Heart right ventricle (tissue), 16 donors: ENCODE measurements at regions of chr22 and their contacts with region 1.

Region 1: GRCh38 chr22:38705235-38706100 is at the start of gene GTPBP1:
- DNase-seq: peak; percentile 95 to 100
- ATAC-seq: peak; percentile 87 to 95 (median 94)
- H3K4me3 ChIP-seq: peak within 1 kb of the TSS; percentile 74 to 98 (median 88)
- H3K27ac ChIP-seq: peak within 1 kb of the TSS; percentile 86 to 98 (median 95)
- H3K4me1 ChIP-seq: peaks cover 12 to 55% (median 51%) of the 10 kb centered on the region in 9 donors
- H3K27me3 ChIP-seq: no peaks in the 10 kb centered on the region
- CTCF ChIP-seq: peak in 2 of 9 donors; percentile 28 to 35
- total RNA-seq, gene GTPBP1: 23.0 to 53.2 (median 34.2) TPM

Region 2: GRCh38 chr22:38656256-38657044 is 49.0 kb before region 1 on chr22 and contains the starts of genes CBY1 and FAM227A:
- intact Hi-C with region 1: loop called in 1 of 10 experiments (anchors 1 kb)
- DNase-seq: peak; percentile 88 to 90
- ATAC-seq: peak; percentile 95 to 98 (median 97)
- H3K4me3 ChIP-seq: peak within 1 kb of the TSS; percentile 66 to 98 (median 89)
- H3K27ac ChIP-seq: peak within 1 kb of the TSS; percentile 83 to 99 (median 96)
- H3K4me1 ChIP-seq: peaks cover 3 to 26% (median 19%) of the 10 kb centered on the region in 9 donors
- H3K27me3 ChIP-seq: no peaks in the 10 kb centered on the region
- CTCF ChIP-seq: peak in 3 of 9 donors; percentile 8 to 16 (median 16)
- total RNA-seq, gene CBY1: 33.8 to 51.0 (median 40.5) TPM
- total RNA-seq, gene FAM227A: 0.11 to 0.97 (median 0.46) TPM

Region 3: DNA sequence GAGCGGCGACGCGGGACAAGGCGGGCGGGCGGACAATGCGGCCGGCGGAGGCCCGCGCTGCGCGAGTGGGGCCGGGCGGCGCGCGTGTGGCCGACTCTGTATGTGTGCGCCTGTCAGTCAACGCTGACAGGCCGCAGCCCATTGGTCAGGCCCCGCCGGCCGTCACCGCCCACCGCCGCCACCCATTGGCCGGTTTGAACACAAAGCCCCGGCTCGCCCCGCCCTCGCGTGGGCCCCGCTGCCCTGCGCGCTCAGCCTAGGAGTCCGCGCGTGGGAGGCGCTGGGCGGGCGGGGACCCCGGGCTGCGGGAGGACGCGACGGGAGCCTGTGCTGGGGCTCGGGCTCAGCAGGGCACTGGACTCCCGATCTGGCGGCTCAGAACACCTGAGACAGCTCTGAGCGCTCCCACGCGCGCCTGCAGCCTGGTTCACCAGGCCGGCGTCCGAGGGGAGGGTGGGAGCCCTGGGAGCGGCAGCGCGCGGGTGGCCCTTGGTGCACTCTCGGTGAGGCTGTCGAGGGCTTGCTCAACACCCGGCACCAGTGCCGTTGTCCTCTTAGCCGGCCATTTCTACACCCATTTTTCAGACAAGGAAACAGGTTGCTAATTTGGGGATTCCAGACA is 50.6 kb after region 1 on chr22 and contains the start of gene SUN2:
- intact Hi-C with region 1: loop called in 5 of 10 experiments (anchors 1 to 10 kb)
- DNase-seq: peak; percentile 92 to 96
- ATAC-seq: peak; percentile 78 to 92 (median 86)
- H3K4me3 ChIP-seq: peak within 1 kb of the TSS; percentile 36 to 82 (median 71)
- H3K27ac ChIP-seq: peak within 1 kb of the TSS; percentile 93 to 99 (median 96)
- H3K4me1 ChIP-seq: peaks cover 2 to 62% (median 27%) of the 10 kb centered on the region in 9 donors
- H3K27me3 ChIP-seq: no peaks in the 10 kb centered on the region
- CTCF ChIP-seq: no peak
- total RNA-seq, gene SUN2: 70.2 to 178 (median 97.2) TPM